ENCODE measurements at regions of chr17 and their contacts with region 1.

Region 1: DNA sequence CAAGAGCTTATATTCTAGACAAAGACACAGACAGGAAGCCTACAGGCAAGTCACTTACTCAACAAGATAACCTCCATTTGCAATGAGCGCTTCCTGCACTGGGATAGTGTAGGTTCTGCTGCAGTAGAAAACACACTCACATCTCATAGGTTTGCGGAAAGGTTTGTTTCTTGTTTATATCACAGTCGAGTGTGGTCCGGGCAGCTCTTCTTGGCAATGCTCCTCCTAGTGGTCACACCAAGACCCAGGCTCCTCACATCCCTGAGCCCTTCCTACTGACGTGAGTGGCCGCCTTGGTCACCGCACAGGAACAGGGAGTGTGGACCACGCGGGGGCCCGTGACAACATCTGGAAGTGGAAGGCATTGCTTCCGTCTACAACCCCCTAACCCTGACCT is 48.0 kb upstream of the RBFOX3 start:
- DNase-seq: peak; percentile 71

Region 2: DNA sequence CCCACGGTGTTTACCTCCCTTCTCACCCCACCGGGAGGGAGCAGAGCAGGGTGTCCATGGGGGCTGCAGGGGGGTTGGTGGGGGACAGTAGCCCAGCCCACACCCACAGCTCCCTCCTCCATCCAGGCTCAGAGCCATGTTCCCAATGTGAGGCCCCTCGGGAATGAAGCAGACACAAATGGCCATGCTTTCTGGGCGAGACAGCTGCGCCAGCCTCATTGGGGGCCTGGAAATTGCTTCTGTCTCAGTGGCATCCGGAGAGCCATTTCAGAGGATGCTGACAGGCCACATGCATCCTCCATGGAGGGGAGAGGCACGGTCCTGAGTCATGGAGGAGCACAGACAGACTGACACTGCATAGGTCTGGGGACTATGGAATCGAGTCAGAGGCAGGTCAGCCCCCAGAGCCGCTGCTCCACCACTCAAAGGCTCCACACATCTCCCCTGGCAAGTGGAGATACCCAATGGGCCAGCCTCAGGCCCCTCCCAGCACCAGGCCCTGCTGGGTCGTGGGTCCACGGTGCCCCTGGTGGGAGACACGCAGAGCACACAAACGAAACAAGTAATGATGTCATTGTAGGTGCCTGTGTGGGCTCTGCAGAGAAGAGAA is 12.4 kb after region 1 on chr17:
- CTCF ChIA-PET with region 1: interaction called, 10 read pairs
- POLR2A ChIA-PET with region 1: interaction called, 3 read pairs
- DNase-seq: no peak

Region 3: DNA sequence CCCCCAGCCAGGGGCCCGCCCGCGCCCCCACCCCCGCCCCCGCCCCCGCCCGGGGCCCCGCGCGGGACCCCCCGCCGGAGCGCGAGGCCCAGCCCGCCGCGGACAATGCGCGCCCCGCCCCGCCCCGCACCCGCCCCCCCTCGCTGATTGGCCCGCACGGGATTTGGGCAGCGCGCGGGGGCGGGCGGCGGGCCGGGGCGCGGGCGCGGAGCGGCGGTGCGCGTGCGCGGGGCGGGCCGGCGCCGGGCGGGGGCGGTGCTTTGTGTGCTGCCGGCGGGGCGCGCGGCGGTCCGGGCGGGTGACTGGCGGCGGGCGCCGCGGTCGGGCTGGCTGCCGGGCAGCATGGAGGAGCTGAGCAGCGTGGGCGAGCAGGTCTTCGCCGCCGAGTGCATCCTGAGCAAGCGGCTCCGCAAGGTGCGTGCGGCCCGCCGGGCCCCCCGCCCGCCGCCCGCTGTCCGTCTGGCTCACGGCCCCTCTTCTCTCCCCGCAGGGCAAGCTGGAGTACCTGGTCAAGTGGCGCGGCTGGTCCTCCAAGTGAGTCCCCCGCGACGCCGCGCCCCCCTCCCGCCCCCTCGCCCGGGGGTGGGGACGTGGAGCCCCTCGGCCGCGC is 119.2 kb after region 1 on chr17 and contains the start of gene CBX2:
- CTCF ChIA-PET with region 1: no interaction called
- POLR2A ChIA-PET with region 1: no interaction called
- DNase-seq: peak; percentile 97

Measured in HEK293T (cell line).